GM18951 (cell line): ENCODE measurements at regions of chr11 and their contacts with region 1.

Region 1: DNA sequence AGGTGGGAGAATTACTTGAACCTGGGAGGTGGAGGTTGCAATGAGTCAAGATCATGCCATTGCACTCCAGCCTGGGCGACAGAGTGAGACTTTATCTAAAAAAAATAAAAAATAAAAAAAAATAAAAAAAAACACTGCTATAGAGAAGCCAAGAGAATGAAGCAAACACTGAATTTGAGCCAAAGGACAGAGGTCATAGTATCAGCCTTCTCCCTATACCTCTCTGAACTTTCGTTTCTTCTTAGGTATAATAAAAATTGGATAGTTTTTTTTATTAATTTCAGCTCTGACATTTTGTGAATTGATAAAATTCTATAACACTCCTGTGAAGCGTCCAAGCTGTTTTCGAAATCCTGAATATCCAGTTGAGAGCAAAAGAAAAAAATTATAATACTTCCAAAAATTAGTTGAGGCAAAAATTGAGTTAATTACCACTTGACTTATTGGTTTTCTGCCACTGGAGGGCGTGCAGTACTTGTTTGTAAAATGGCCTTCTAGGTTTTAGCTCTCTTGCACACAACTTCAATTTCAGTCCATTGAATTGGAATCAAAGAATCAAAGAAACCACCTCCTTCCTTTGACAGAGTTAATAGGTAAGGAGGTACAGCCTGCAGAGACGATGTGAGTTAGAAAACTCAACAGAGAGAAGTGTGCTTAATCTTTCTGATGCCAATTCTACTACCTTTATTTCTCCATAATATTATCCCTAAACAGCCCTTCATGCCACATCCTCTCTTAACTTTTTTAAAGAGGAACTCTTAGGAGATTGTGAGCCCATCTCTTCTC is 143.2 kb downstream of the BBOX1 start:
- POLR2A ChIP-seq: no peak

Region 2: DNA sequence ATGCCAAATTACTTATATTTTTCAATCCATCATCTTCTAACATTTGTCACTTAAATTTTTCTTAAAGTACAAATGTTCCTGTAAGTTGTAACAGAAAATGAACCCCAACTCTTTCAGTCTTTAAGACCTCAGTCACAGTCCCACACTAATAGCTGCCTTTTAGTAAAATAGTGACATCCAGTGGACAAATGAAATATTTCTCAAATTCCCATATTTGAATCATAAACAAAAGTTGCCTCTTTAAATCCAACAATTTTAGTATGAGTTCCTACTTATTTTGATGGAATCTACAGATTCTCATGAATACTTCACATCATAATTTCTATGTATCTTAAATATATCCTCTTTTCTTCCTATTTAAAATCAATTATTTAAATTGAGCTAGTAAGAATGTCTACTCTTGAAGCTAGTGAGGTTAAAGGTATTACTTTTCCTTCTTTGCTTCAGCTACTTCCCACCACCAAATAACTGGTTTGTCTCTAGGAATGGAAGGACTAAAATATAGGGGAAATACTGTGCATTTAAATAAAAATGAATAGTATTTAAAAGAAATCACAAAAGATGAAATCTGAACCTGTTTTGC is 313.5 kb after region 1 on chr11:
- in situ Hi-C with region 1: loop called (anchors 10 kb)
- POLR2A ChIP-seq: no peak